PC-9 (cell line): ENCODE measurements at regions of chr2 and their contacts with region 1.

Region 1: GRCh38 chr2:20398956-20399567 is 47.8 kb upstream of the RHOB start:
- DNase-seq: peak in 1 of 2 experiments; percentile 34
- H3K4me3 ChIP-seq: no peak overlapping the region
- H3K27ac ChIP-seq: no peak overlapping the region
- H3K4me1 ChIP-seq: no peaks in the 10 kb centered on the region
- H3K27me3 ChIP-seq: no peaks in the 10 kb centered on the region
- CTCF ChIP-seq: no peak

Region 2: DNA sequence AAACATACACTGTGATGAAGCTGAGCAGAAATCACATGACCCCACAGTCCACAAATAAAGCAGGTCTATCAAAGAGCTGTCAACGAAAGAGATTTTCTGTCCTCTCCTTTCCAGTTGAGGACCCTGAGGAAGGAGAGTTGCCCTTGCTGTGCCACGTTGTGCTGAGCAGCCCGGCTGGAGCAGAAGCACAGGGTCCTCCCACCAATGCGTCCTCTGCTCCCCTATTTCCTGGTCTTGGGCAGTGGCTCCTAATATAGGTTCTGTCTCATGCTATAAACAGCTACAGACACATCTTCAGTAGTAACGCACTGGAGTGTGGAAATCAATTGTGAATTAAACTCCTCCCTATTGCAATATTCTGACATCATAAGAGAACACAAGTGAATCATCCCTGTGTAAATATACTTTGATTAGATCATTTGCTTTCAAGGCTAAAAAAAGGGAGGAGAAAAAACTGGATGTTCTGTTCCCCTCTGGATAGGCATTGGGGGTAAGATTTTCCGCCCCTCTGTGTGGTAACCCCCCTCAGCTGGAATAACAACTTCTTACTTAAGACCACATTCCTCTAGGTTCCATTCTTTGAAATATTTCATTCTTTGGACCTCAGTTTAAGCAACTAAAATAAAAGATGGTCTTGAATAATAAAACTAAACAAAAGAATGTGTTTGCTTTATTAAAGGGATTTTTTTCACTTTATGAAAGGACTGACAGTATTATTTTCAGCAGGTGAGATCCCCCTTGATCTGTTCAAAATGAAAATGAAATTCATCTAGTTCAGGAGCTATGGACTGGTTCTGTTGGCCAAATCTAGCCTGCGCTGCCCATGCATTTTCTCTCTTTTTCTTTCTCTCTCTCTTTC is 39.5 kb after region 1 on chr2:
- CTCF ChIA-PET with region 1: interaction called, 11 read pairs
- POLR2A ChIA-PET with region 1: no interaction called
- intact Hi-C with region 1: loop called (anchors 1 kb)
- DNase-seq: peak in 1 of 2 experiments; percentile 96
- H3K4me3 ChIP-seq: peak overlapping the region; percentile 35; the same call in 1 of the 2 replicates
- H3K27ac ChIP-seq: peak overlapping the region; percentile 76
- H3K4me1 ChIP-seq: peaks cover 37% of the 10 kb centered on the region
- H3K27me3 ChIP-seq: no peaks in the 10 kb centered on the region
- CTCF ChIP-seq: no peak

Region 3: DNA sequence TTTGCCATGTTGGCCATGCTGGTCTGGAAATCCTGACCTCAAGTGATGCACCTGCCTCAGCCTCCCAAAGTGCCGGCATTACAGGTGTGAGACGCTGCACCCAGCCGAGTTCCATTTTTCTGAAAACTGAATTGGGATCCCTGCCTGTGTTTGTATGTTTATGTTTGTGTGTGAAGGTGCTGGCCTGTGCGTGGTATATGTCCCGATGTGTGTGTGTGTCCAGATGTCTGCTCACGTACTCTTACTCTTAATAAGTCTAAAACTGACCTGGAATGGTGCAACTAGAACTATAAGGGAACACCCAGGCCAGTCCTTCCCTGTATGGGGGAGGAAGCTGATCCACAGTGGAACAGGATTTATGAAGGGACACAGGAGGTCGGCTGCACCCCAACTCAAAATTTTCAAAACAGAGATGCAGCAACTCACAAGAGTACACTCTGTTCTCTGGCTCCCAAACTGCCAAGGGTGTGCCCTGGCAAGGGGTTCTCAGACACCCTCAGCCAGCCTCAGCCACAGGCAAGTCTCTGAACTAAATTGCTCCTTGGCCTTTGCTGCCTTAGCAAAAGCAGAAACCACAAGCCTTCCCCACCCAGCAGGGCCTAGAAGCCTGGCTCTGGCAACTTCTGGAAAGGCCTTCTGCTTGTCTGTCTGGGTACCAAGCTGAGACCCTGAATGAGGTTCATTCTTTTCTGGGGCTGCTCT is 84.3 kb after region 1 on chr2:
- CTCF ChIA-PET with region 1: no interaction called
- POLR2A ChIA-PET with region 1: interaction called, 11 read pairs
- intact Hi-C with region 1: no loop called
- DNase-seq: no peak
- H3K4me3 ChIP-seq: no peak overlapping the region
- H3K27ac ChIP-seq: no peak overlapping the region
- H3K4me1 ChIP-seq: peaks cover 14% of the 10 kb centered on the region
- H3K27me3 ChIP-seq: no peaks in the 10 kb centered on the region
- CTCF ChIP-seq: no peak

Region 4: DNA sequence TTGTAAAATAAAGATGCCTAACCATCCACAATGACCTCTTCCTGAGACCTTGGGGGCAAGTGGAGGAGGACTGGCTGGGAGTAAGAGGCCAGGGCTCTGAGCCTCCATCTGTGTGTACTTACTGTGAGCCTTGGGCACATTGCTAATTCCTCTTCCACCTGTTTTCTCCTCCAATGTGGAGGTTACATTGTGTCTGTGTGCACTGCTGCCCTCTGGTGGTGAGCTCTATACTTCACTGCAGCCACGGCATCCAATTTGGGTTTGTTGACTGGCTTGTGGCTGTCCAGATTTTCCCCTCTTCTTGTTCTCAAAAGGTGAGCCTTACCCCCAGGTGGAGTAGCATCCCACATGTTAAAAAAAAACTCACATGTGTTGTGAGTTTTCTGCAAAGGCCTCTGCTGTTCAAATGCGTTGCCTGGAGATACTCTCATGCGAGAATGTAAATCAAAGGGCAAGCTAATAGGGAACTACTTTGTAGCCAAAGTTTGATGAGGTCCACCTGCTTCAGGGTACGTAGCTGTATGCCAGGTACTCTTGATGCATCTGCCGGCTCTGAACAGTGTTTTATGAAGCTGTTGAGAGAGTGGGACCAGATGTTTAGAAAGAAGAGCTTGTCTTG is 564.0 kb after region 1 on chr2:
- CTCF ChIA-PET with region 1: no interaction called
- POLR2A ChIA-PET with region 1: no interaction called
- intact Hi-C with region 1: loop called (anchors 2 kb)
- DNase-seq: peak; percentile 57 to 59
- H3K4me3 ChIP-seq: no peak overlapping the region
- H3K27ac ChIP-seq: no peak overlapping the region
- H3K4me1 ChIP-seq: no peaks in the 10 kb centered on the region
- H3K27me3 ChIP-seq: peaks cover 88% of the 10 kb centered on the region
- CTCF ChIP-seq: peak; percentile 92